ENCODE measurements at regions of chr12 and their contacts with region 1.

Region 1: DNA sequence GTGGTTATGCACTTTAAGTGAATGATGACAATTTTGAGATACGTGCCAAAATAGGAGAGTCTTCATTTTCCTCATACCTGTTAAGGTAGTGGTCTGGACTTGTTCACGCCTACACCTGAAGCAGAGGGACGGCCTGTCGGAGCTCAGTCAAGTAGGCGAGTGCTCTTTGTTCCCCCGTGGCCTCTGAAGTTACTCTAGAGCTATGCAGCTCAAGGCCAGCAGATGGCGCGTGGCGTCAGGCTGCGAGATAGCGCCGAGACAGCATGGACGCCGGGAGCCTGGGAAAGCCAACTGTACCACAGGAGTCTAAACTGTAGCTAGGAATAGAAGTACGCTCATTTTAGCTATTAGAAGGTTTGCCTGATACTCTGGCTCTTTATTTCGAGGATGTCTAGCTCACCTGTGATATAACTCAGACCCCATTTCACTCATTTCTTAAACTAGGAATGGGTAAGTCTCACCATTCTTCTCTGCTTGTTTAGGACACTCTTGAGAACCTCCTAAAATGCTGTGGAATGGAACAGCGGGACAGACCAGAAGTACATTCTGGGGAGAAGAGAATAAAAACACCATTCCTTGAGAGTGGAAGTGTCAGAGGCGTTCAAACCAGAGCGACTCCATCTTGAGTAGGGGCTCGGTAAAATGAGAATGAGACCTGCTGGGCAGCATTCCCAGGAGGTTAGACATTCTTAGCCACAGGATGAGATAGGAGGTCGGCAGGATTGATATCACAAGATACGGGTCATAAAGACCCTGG is 267.4 kb upstream of the HMGA2 start:
- DNase-seq: peak; percentile 68
- H3K4me3 ChIP-seq: no peak overlapping the region
- H3K27ac ChIP-seq: peak overlapping the region in 1 of 2 experiments; percentile 50; a peak in 1 of 4 replicates
- H3K4me1 ChIP-seq: peaks cover 0 to 7% of the 10 kb centered on the region in 2 experiments; a peak in 1 of 4 replicates
- H3K27me3 ChIP-seq: no peaks in the 10 kb centered on the region
- CTCF ChIP-seq: peak; percentile 77
- EP300 ChIP-seq: no peak
- RAD21 ChIP-seq: peak; percentile 74

Region 2: DNA sequence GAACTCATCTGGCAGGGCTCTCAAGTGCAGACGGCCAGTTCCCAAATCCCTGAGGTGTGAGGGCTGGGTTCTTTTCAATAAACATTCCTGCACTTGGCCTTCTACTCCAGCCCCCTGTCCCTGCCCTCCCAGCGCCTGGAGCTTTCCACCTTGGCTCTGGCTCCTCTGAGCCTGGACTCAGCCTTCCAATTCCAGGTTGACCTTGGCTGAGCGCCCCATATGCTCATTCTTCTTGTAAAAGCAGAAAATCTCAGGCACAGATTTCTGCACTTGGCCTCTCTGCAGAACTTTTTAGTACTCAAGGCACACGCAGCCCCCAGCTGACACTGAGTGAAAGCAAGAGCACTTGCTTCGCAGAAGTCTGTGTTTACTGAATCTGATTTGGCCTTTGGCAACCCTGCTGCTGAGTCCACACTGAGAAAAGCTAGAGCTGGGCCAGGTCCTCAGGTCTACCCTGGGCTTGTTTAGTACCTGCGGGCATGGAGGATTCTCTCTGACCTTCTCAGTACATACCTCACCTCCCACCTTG is 55.7 kb before region 1 on chr12:
- CTCF ChIA-PET with region 1: no interaction called
- POLR2A ChIA-PET with region 1: no interaction called
- DNase-seq: no peak
- H3K4me3 ChIP-seq: no peak overlapping the region
- H3K27ac ChIP-seq: peak overlapping the region; percentile 64 to 83; a peak in 3 of 4 replicates
- H3K4me1 ChIP-seq: peaks cover 0 to 23% of the 10 kb centered on the region in 2 experiments; a peak in 3 of 4 replicates
- H3K27me3 ChIP-seq: no peaks in the 10 kb centered on the region
- CTCF ChIP-seq: no peak
- EP300 ChIP-seq: no peak
- RAD21 ChIP-seq: no peak

Region 3: GRCh38 chr12:65546528-65546927 is 10.3 kb before region 1 on chr12:
- CTCF ChIA-PET with region 1: interaction called, 15 read pairs
- POLR2A ChIA-PET with region 1: no interaction called
- DNase-seq: no peak
- H3K4me3 ChIP-seq: no peak overlapping the region
- H3K27ac ChIP-seq: no peak overlapping the region
- H3K4me1 ChIP-seq: no peaks in the 10 kb centered on the region
- H3K27me3 ChIP-seq: no peaks in the 10 kb centered on the region
- CTCF ChIP-seq: no peak
- EP300 ChIP-seq: no peak
- RAD21 ChIP-seq: no peak

Measured in SK-N-SH (cell line).